ENCODE measurements at regions of chr12 and their contacts with region 1.

Region 1: GRCh38 chr12:46898152-46898931 is 72.5 kb upstream of the SLC38A4 start:
- DNase-seq: no peak
- ATAC-seq: no peak
- H3K4me3 ChIP-seq: no peak overlapping the region
- H3K27ac ChIP-seq: peak overlapping the region; percentile 42
- H3K4me1 ChIP-seq: no peaks in the 10 kb centered on the region
- H3K27me3 ChIP-seq: no peaks in the 10 kb centered on the region
- CTCF ChIP-seq: no peak

Region 2: DNA sequence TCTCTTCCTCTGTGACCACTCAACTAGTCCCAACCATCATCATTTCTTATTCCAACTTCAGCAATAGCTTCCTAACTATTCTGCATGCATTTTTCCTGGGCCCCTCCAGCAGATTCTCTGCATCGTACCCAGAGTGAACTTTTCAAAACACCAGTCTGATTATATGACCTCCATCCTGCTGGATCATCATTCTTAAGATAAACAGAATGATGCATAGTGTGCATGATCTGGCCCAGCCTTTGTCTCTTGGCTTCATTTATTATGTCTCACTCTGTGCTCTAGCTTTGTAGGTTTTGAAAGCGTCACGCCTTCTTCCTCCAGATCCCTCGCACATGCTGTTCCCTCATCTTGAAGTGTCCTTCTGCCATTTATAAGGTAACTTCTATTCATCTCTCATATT is 26.2 kb before region 1 on chr12:
- intact Hi-C with region 1: no loop called
- DNase-seq: no peak
- ATAC-seq: no peak
- H3K4me3 ChIP-seq: no peak overlapping the region
- H3K27ac ChIP-seq: no peak overlapping the region
- H3K4me1 ChIP-seq: peaks cover 9% of the 10 kb centered on the region
- H3K27me3 ChIP-seq: no peaks in the 10 kb centered on the region
- CTCF ChIP-seq: no peak

Region 3: DNA sequence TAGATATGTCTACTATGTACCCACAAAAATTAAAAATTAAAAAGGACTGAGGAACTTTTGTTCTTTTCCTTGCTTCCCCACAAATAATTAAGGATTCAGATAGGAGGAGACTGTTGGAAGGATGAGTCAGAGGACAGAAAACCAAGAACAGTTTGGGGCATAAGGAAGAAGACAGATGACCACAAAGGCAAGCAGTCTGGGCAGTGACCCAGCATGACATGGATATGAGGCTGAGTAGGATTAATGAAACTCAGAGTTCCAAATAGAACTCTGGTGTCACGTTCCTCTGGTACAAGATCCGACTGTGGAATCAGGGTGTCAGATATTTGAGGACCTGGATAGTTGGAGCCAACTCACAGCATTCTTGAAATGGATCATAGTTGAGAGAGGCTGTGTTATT is 16.7 kb after region 1 on chr12:
- intact Hi-C with region 1: loop called (anchors 1 to 2 kb)
- DNase-seq: peak; percentile 74 to 90
- ATAC-seq: peak; percentile 97 to 99 (median 99)
- H3K4me3 ChIP-seq: no peak overlapping the region
- H3K27ac ChIP-seq: peak overlapping the region; percentile 80
- H3K4me1 ChIP-seq: peaks cover 21% of the 10 kb centered on the region
- H3K27me3 ChIP-seq: no peaks in the 10 kb centered on the region
- CTCF ChIP-seq: no peak

Region 4: DNA sequence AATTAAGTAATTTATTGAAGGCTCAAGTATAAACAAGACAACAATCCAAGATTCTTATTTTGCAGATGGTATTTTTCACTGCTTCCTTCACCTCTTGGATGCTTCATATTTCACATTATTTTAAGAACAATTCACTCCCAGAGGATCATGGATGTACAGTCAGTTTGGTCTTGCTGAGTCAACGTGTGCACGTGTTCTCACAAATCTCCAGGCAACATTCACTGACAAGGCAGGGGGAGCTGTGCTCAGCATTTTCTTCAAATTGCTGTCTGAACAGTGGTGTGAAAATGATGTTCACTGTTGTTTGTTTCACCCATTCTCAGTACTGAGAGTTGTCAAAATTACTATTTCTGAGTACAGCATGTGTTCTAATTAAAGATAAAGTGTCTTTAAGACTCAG is 45.7 kb after region 1 on chr12:
- intact Hi-C with region 1: no loop called
- DNase-seq: no peak
- ATAC-seq: peak; percentile 67 to 86 (median 80)
- H3K4me3 ChIP-seq: no peak overlapping the region
- H3K27ac ChIP-seq: no peak overlapping the region
- H3K4me1 ChIP-seq: peaks cover 10% of the 10 kb centered on the region
- H3K27me3 ChIP-seq: no peaks in the 10 kb centered on the region
- CTCF ChIP-seq: peak; percentile 20

Region 5: GRCh38 chr12:47234629-47235028 is 336.3 kb after region 1 on chr12:
- intact Hi-C with region 1: no loop called
- DNase-seq: no peak
- ATAC-seq: no peak
- H3K4me3 ChIP-seq: no peak overlapping the region
- H3K27ac ChIP-seq: no peak overlapping the region
- H3K4me1 ChIP-seq: no peaks in the 10 kb centered on the region
- H3K27me3 ChIP-seq: no peaks in the 10 kb centered on the region
- CTCF ChIP-seq: no peak

Measured in psoas muscle (tissue), 8 donors.